ENCODE measurements at regions of chr17 and their contacts with region 1.

Region 1: DNA sequence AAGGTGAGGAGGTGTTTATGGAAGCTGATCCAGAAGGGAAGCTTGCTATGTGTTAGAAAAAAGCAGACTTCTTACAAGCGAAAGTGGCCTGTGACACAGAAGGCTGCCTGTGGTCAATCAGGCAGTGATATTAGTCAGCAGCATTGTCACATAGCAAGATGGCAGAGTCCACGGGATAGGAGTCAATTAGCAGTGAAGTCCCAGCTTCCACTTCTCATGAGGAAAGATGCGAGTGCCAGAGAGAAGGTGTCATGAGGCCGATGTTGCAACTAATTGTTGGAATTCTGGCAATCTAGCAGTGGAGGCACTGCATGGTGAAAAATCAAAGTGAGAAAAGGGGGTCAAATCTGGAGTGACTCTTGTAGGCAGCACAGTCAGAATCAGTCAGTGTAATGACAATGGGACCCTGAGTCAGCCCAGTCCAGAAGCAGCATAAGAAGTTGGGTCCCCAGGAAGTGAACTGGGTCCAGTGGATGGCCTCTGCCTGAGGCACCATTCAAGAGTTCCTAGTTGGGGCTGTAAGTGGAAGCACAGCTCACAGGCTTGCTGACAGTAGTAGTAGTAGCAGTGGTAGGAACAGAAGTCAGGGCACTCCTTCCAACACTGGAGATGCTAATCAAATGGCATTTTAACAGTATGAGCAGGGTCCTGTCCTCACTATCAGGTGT is 85.1 kb downstream of the TNFRSF13B start:
- DNase-seq: no peak
- ATAC-seq: no peak

Region 2: GRCh38 chr17:16129441-16130205 is 757.2 kb before region 1 on chr17:
- intact Hi-C with region 1: no loop called
- DNase-seq: no peak
- ATAC-seq: no peak

Region 3: GRCh38 chr17:16593356-16594102 is 293.3 kb before region 1 on chr17:
- intact Hi-C with region 1: no loop called
- DNase-seq: no peak
- ATAC-seq: peak; percentile 66

Region 4: GRCh38 chr17:16639438-16639837 is 247.4 kb before region 1 on chr17:
- intact Hi-C with region 1: loop called (anchors 5 kb)
- DNase-seq: no peak
- ATAC-seq: no peak